WTC11 (cell line): ENCODE measurements at regions of chr11 and their contacts with region 1.

Region 1: DNA sequence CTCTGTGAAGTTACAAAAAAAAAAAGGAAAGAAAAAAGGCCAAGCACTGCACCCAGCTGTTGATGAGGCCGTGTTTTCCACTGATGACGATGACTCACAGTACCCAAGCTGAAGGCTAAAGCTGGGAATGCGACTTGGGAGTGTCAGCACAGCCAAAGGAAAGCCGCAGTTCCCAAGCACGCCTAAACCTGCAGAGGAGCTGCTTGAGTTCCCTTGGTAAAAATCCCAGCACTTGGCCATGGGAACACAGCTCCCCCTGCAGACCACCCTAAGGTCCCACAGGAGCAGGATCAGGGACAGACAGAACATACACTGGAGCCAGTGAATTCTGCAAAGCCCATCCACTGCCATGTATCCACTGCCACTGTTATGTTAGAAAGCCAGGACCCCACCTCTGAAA is 39.9 kb downstream of the SERGEF start:
- DNase-seq: peak; percentile 79
- ATAC-seq: peak; percentile 99
- H3K4me3 Mint-ChIP-seq: no peak overlapping the region
- H3K27ac Mint-ChIP-seq: peak overlapping the region; percentile 74
- H3K4me1 Mint-ChIP-seq: 0 out of 2 replicates have a peak, but pooled peaks cover 3% of the 10 kb centered on the region
- H3K27me3 Mint-ChIP-seq: no peaks in the 10 kb centered on the region; the same call in 1 of the 2 replicates
- CTCF ChIP-seq: peak; percentile 67

Region 2: DNA sequence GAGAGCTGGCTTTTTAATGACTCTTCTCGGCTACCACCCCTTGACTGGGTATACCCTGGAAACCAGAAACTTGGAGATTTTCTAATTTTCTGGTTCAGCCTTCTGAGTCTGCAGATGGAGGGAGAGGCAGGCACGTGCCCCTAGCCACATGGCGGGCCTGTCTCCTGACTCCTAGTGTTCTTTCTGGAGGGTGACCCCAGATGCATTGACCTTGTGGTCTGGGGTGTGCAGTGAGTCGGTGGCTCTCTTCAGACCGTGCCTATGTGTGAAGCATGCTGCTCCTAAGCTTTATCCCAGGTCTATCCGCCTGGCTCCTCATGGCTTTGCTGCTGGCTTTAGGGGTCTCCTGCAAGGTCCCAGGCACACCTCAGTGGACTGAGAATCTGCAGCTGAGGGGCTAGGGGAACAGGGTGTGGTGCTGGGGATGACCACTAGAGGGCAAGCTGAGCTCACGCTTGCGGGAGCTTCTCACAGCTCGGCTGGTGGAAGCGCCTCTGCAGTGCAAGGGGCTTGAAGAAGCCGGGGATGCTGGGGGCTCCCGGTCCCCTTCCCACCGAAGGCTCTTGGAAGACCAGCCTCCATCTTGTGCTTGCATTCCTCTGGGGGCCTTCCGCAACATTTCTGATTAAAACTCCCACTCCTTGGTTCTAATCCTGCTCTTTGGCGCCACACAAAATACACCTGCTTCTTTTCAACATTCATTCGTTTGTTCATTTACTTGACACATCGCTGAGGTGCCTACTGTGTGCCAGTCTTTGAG is 374.1 kb before region 1 on chr11:
- CTCF ChIA-PET with region 1: interaction called, 13 read pairs
- POLR2A ChIA-PET with region 1: no interaction called
- DNase-seq: peak; percentile 94
- ATAC-seq: peak; percentile 95
- H3K4me3 Mint-ChIP-seq: no peak overlapping the region
- H3K27ac Mint-ChIP-seq: no peak overlapping the region
- H3K4me1 Mint-ChIP-seq: peaks cover 6% of the 10 kb centered on the region
- H3K27me3 Mint-ChIP-seq: peaks cover 7% of the 10 kb centered on the region
- CTCF ChIP-seq: peak; percentile 95

Region 3: GRCh38 chr11:17736930-17737817 is 235.8 kb before region 1 on chr11:
- CTCF ChIA-PET with region 1: interaction called, 99 read pairs
- POLR2A ChIA-PET with region 1: no interaction called
- DNase-seq: no peak
- ATAC-seq: no peak
- H3K4me3 Mint-ChIP-seq: no peak overlapping the region
- H3K27ac Mint-ChIP-seq: no peak overlapping the region
- H3K4me1 Mint-ChIP-seq: peaks cover 11% of the 10 kb centered on the region
- H3K27me3 Mint-ChIP-seq: peaks cover 24% of the 10 kb centered on the region
- CTCF ChIP-seq: no peak

Region 4: DNA sequence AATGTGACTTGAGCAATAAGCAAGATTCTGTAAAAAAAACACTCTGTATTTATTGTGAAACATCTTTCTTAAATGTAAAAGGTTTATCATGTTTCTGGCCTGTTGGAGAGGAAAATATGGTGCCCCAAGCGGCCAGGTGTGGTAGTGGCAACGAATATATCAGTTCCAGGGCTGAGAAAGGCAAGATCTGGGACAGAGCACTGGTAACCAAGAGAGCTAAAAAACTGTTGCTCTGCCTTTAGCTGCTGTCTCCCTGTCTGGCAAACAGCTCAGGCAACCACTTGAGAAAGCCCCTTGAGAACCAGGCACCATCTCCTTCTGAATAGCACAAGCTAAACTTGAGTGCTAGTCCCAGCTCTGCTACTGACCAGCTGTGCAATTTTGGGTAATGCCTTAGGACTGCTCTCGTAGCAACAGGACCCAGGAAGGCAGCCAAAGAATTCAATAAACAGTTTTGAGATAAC is 108.5 kb before region 1 on chr11:
- CTCF ChIA-PET with region 1: interaction called, 11 read pairs
- POLR2A ChIA-PET with region 1: no interaction called
- DNase-seq: peak; percentile 53
- ATAC-seq: peak; percentile 89
- H3K4me3 Mint-ChIP-seq: no peak overlapping the region
- H3K27ac Mint-ChIP-seq: no peak overlapping the region
- H3K4me1 Mint-ChIP-seq: peaks cover 17% of the 10 kb centered on the region
- H3K27me3 Mint-ChIP-seq: no peaks in the 10 kb centered on the region
- CTCF ChIP-seq: peak; percentile 57

Region 5: GRCh38 chr11:17960091-17960490 is 12.9 kb before region 1 on chr11:
- CTCF ChIA-PET with region 1: interaction called, 13 read pairs
- POLR2A ChIA-PET with region 1: no interaction called
- DNase-seq: no peak
- ATAC-seq: no peak
- H3K4me3 Mint-ChIP-seq: no peak overlapping the region
- H3K27ac Mint-ChIP-seq: no peak overlapping the region
- H3K4me1 Mint-ChIP-seq: peaks cover 6% of the 10 kb centered on the region; the same call in 1 of the 2 replicates
- H3K27me3 Mint-ChIP-seq: no peaks in the 10 kb centered on the region
- CTCF ChIP-seq: no peak

Region 6: DNA sequence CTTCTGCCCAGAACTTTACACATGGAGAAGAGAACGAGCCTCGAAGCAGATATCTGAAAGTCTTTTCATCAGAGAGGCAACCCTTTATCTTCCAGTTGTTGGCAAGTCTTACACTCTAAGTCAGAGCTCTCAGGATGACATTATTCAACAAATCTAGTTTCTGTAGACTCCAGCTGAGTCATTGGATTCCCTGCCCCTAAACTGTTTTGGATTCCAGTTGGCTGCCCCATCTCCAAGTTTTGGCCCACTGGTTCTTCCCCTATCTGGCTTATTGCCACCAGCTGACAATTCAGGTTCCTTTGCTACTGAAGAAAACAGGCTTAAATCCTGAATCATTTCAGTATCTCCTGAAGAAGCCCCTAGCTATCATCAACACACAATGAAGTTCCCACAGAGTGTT is 118.7 kb after region 1 on chr11:
- CTCF ChIA-PET with region 1: no interaction called
- POLR2A ChIA-PET with region 1: no interaction called
- DNase-seq: no peak
- ATAC-seq: no peak
- H3K4me3 Mint-ChIP-seq: no peak overlapping the region
- H3K27ac Mint-ChIP-seq: no peak overlapping the region
- H3K4me1 Mint-ChIP-seq: no peaks in the 10 kb centered on the region
- H3K27me3 Mint-ChIP-seq: no peaks in the 10 kb centered on the region
- CTCF ChIP-seq: no peak